Esophagus muscularis mucosa (tissue), 4 donors: ENCODE measurements at regions of chr13 and their contacts with region 1.

Region 1: GRCh38 chr13:102773441-102774215 is at the start of gene TEX30:
- DNase-seq: peak; percentile 92
- H3K4me3 ChIP-seq: peak within 1 kb of the TSS; percentile 75 to 91 (median 86)
- H3K27ac ChIP-seq: peak within 1 kb of the TSS; percentile 82 to 91 (median 85)
- H3K4me1 ChIP-seq: peaks cover 11 to 21% (median 14%) of the 10 kb centered on the region in 4 donors
- H3K27me3 ChIP-seq: no peaks in the 10 kb centered on the region
- CTCF ChIP-seq: peak in 2 of 3 experiments; percentile 25 to 27
- EP300 ChIP-seq: no peak
- POLR2A ChIP-seq: peak; percentile 57
- total RNA-seq, gene TEX30: 5.1 to 12.5 (median 8.0) TPM

Region 2: GRCh38 chr13:102596147-102597028 is 177.2 kb before region 1 on chr13 and contains the start of gene TPP2:
- intact Hi-C with region 1: loop called (anchors 2 kb)
- DNase-seq: peak; percentile 99
- H3K4me3 ChIP-seq: peak within 1 kb of the TSS; percentile 84 to 99 (median 98)
- H3K27ac ChIP-seq: peak within 1 kb of the TSS; percentile 93 to 98 (median 97)
- H3K4me1 ChIP-seq: peaks cover 30 to 54% (median 50%) of the 10 kb centered on the region in 4 donors
- H3K27me3 ChIP-seq: peaks cover 0 to 4% (median 0%) of the 10 kb centered on the region in 4 donors
- CTCF ChIP-seq: no peak
- EP300 ChIP-seq: no peak
- POLR2A ChIP-seq: peak; percentile 45
- total RNA-seq, gene TPP2: 30.3 to 38.4 (median 32.1) TPM

Region 3: DNA sequence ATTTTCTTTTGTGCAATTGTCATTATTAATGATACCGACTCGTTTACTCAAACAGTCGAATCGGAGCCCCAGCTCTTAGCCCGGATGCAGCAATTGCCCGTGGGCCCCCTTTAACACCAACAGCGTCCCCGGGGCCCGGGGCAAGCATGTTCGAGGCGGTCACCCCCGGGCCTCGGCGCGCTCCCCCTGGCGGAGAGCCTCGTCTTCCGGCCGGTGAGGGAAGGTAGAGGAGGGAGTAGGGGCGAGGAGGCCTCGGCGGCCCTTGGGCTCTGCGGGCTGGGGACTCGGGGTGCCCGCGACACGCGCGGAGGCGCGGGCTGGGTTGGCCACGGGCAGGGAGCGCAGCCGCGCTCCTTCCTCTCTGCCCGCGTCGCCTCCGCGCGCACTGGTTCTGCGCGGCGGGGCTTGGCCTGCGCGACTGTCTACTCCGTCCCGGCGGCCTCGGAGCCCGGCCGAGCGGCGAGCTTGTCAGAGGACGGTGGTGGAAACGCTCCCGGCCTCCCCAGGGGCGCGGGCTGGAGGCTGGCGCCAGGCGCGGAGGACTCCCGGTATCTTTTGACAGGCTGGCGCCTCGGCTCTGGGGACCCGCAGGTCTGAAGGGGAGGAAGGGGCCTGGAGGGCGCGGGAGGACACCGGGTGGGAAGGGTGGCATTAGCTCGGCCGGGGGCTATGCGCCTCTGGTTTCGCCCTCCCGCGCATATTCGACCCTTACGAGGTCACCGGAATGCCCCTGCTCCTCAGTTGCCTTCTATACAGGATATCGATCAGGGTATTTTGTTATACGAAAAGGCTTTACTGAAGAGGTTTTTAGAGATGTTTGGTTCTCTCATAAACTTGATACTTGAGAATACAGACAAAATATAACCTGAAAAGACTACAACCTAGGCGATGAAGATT is 26.8 kb after region 1 on chr13:
- intact Hi-C with region 1: loop called (anchors 2 kb)
- DNase-seq: peak; percentile 93
- H3K4me3 ChIP-seq: peak overlapping the region; percentile 76 to 90 (median 86)
- H3K27ac ChIP-seq: peak overlapping the region; percentile 83 to 91 (median 85)
- H3K4me1 ChIP-seq: peaks cover 26 to 71% (median 37%) of the 10 kb centered on the region in 4 donors
- H3K27me3 ChIP-seq: no peaks in the 10 kb centered on the region
- CTCF ChIP-seq: peak; percentile 66 to 79 (median 71)
- EP300 ChIP-seq: no peak
- POLR2A ChIP-seq: no peak